ENCODE measurements at regions of chr6 and their contacts with region 1.

Region 1: GRCh38 chr6:43521836-43522235 is 4.9 kb downstream of the POLR1C start:
- DNase-seq: no peak
- ATAC-seq: no peak
- H3K4me3 ChIP-seq: no peak overlapping the region
- H3K27ac ChIP-seq: no peak overlapping the region
- H3K4me1 ChIP-seq: peaks cover 7% of the 10 kb centered on the region; the same call in 1 of the 2 replicates
- H3K27me3 ChIP-seq: no peaks in the 10 kb centered on the region
- CTCF ChIP-seq: no peak

Region 2: GRCh38 chr6:43593938-43594337 is 72.1 kb after region 1 on chr6:
- CTCF ChIA-PET with region 1: no interaction called
- POLR2A ChIA-PET with region 1: no interaction called
- in situ Hi-C with region 1: loop called (anchors 10 kb)
- intact Hi-C with region 1: no loop called
- DNase-seq: no peak
- ATAC-seq: no peak
- H3K4me3 ChIP-seq: no peak overlapping the region
- H3K27ac ChIP-seq: no peak overlapping the region
- H3K4me1 ChIP-seq: no peaks in the 10 kb centered on the region
- H3K27me3 ChIP-seq: no peaks in the 10 kb centered on the region
- CTCF ChIP-seq: no peak

Measured in Panc1 (cell line).